Activated CD4-positive, alpha-beta T cell treated with anti-CD3 and anti-CD28 coated beads, Interleukin-2, amount 10 ng/mL, durations not matched to agents 24 days and 14 days (primary cell): ENCODE measurements at regions of chr11 and their contacts with region 1.

Region 1: DNA sequence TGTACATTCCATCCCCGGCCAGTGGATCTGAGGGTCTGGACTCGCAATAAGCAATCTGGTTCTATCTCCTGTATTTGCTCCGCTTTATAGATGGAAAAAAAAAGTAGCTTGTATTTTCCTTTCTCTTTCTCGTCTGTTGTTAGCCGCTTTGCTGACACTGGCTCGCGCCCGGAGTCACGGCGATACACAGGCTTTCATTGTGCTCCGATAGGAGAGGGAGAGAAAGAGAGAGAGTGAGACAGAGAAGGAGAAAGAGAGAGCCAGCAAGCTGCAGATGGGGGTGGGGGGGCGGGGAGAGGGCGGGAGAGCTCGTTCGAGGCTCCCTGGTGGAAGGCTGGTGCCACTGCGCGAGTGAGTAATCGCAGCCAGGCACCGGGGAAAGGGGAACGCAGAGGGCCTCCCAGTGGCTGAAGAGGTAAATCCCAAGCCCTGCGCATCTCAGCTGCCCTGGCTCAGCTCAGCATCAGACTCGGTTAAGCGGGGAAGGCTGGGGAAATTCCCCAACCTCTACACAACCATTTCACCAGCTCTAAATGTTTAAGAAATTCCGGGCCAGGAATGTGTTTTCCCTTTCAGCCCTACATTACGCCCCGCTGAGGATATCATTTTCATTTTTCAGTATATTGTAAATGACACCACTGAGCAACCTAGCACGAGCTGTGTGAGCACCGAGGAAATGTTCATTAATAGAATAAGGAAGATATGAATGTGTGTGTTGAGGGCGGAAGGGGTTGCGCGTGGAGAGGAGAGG is at the start of gene MAML2:
- DNase-seq: peak; percentile 96
- H3K4me3 Mint-ChIP-seq: peak within 1 kb of the TSS; percentile 95
- H3K27ac Mint-ChIP-seq: peak within 1 kb of the TSS; percentile 93
- H3K4me1 Mint-ChIP-seq: peaks cover 43% of the 10 kb centered on the region
- H3K27me3 Mint-ChIP-seq: no peaks in the 10 kb centered on the region
- total RNA-seq, gene MAML2: 11.9 and 12.4 TPM in 2 replicates

Region 2: DNA sequence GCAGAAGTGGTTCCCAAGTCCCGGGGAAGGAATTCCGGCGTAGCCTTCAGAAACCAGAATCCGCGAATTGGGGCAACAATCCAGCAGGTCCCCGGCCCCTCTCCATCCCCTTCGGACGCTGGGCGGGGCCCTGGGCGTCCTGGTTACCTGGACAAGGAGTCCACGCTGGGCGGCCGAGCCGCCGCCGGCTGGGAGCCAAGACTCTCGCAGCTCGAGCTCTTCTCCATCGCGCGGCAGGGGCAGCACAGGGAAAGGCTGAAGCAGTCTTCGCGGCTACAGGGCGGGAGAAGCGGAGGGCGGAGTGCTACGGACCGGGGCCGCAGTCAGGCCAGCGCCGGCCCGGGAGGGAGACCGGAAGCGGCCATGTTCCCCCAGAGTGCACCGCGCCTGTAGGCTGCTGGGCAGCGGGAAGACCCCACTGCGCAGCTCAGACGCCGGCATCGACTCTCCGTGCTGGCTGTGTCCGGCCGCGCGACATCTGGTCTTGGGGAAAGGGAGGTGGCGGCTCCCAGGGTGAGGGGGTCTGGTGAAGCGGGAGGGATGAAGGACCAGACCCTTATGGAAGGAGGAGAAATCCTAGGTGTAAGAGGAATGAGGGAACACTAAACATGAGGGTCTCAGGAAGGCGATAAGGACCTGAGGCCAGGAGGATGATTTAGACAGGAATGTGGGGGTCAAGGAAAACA is 419.3 kb before region 1 on chr11 and contains the start of gene MTMR2:
- intact Hi-C with region 1: loop called (anchors 10 kb)
- DNase-seq: peak; percentile 86
- H3K4me3 Mint-ChIP-seq: peak within 1 kb of the TSS; percentile 99
- H3K27ac Mint-ChIP-seq: peak within 1 kb of the TSS; percentile 96
- H3K4me1 Mint-ChIP-seq: peaks cover 24% of the 10 kb centered on the region
- H3K27me3 Mint-ChIP-seq: peaks cover 12% of the 10 kb centered on the region
- total RNA-seq, gene MTMR2: 37.5 and 38.4 TPM in 2 replicates

Region 3: DNA sequence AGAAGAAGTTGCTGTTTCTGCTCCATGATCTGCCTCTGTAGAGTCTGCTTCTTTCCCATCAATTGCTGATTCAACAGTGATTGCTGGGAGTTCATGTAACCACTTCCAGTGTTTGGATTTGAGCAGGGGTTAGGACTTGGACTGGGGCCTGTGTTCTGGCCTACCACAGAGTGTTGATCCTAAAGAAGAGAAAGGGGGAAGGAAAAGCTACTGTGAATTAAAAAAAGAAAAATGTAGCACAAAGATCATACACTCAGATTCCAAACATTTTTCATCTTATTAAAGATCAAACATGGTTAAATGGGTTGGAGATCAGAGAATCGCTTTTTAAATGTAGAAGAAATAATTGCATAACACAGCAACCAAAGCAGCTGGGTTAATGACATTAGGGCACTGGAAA is 351.6 kb before region 1 on chr11:
- intact Hi-C with region 1: no loop called
- DNase-seq: no peak
- H3K4me3 Mint-ChIP-seq: no peak overlapping the region
- H3K27ac Mint-ChIP-seq: no peak overlapping the region
- H3K4me1 Mint-ChIP-seq: peaks cover 12% of the 10 kb centered on the region
- H3K27me3 Mint-ChIP-seq: no peaks in the 10 kb centered on the region

Region 4: GRCh38 chr11:96062134-96062533 is 281.0 kb before region 1 on chr11:
- intact Hi-C with region 1: loop called (anchors 1 kb)
- DNase-seq: peak; percentile 70
- H3K4me3 Mint-ChIP-seq: peak overlapping the region; percentile 11
- H3K27ac Mint-ChIP-seq: peak overlapping the region; percentile 86
- H3K4me1 Mint-ChIP-seq: peaks cover 43% of the 10 kb centered on the region
- H3K27me3 Mint-ChIP-seq: no peaks in the 10 kb centered on the region

Region 5: DNA sequence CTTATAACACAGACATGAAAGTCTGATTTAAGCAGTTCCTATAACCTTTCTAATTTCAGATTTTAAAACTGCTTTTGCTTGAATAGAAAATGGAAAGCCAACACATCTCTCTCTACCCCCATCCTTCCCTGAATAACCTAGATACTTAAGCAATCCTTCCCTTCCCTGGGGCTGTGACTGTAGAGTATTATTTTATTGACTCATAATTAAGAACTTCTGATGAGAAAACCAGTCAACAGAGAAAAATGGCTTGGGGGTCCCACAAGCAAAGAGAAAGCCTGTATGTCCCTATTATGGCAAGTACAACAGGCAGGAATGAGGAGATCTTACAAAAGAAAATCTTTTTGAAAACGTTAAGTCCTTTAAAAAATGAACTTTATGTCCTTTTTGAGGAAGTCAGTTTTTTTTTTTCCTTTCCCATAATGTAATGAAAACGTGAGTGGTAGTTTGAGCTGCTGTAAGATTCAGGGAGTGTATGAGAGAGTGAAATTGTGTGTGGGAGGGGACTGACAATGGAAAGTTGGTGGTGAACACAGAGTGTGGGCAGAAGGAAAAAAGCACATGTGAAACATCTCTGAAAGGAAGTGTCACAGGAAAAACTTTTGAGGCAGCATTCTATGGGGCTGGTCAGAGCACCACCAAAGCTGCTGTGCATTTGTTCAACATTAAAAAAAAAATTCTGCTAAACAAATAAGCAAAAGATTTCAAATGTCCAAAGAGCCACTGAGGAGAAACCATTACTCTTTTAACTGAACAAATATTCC is 154.7 kb before region 1 on chr11:
- intact Hi-C with region 1: loop called (anchors 1 kb)
- DNase-seq: peak; percentile 74
- H3K4me3 Mint-ChIP-seq: peak overlapping the region; percentile 26
- H3K27ac Mint-ChIP-seq: peak overlapping the region; percentile 66
- H3K4me1 Mint-ChIP-seq: peaks cover 52% of the 10 kb centered on the region
- H3K27me3 Mint-ChIP-seq: no peaks in the 10 kb centered on the region

Region 6: GRCh38 chr11:96242971-96243647 is 100.0 kb before region 1 on chr11:
- intact Hi-C with region 1: loop called (anchors 2 kb)
- DNase-seq: peak; percentile 94
- H3K4me3 Mint-ChIP-seq: peak overlapping the region; percentile 86
- H3K27ac Mint-ChIP-seq: peak overlapping the region; percentile 98
- H3K4me1 Mint-ChIP-seq: peaks cover 48% of the 10 kb centered on the region
- H3K27me3 Mint-ChIP-seq: no peaks in the 10 kb centered on the region

Region 7: DNA sequence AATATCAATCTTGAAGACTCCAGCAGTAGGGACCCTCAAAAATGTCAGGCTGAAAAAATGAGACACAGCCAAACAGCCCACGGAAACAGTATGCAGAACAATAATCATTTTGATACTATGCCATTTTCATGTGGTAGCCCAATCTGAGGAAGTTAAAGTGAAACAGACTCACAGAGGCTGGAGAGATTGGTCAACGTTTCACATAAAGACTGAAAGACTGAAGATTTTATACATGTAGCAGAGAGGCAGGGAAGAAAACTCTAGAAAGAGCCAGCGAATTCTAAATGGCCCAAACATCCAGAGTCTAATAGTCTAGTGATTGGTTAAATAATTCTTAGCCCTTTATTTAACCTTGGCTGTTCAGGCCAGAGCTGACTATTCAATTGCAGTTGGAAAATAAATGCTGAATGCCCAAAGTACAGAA is 49.5 kb before region 1 on chr11:
- intact Hi-C with region 1: loop called (anchors 2 kb)
- DNase-seq: peak; percentile 65
- H3K4me3 Mint-ChIP-seq: peak overlapping the region; percentile 10
- H3K27ac Mint-ChIP-seq: peak overlapping the region; percentile 23
- H3K4me1 Mint-ChIP-seq: peaks cover 43% of the 10 kb centered on the region
- H3K27me3 Mint-ChIP-seq: no peaks in the 10 kb centered on the region